ENCODE measurements at regions of chr2 and their contacts with region 1.

Region 1: GRCh38 chr2:190802129-190802528 is 78.5 kb upstream of the GLS start:
- DNase-seq: no peak
- H3K4me3 ChIP-seq: no peak overlapping the region
- H3K27ac ChIP-seq: no peak overlapping the region
- H3K4me1 ChIP-seq: no peaks in the 10 kb centered on the region
- H3K27me3 ChIP-seq: no peaks in the 10 kb centered on the region
- CTCF ChIP-seq: no peak
- POLR2A ChIP-seq: no peak

Region 2: DNA sequence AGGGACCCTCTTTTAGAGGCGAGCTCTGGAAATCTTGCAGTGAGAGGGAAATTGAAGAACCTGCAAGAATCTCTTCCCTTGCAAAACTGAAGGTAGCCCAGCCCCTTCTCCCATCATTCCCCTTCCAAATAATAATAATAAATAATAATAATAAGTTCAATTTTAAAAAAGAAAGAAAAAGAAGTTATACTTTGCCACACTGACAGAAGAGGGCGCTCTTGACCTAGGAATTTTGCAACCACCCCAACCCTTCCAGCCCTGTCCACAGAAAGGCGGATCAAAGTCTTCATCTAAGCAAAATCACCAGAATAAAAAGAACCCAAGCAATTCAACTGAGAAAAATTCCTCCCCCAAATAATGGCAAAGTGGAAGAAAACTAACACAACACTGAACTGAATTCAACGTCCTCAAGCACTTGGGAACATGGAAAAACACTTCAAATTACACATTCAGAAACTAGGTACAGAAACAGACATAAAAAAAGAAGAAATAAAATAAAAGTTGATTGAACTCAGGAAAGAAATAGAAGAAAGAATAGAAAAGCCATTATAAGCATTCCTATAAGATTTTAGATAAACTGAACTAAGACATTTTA is 20.4 kb before region 1 on chr2:
- intact Hi-C with region 1: loop called (anchors 2 kb)
- DNase-seq: peak; percentile 50 to 58
- H3K4me3 ChIP-seq: no peak overlapping the region
- H3K27ac ChIP-seq: no peak overlapping the region
- H3K4me1 ChIP-seq: peaks cover 11 to 12% of the 10 kb centered on the region in 2 donors
- H3K27me3 ChIP-seq: no peaks in the 10 kb centered on the region
- CTCF ChIP-seq: peak; percentile 42 to 85 (median 62)
- POLR2A ChIP-seq: no peak

Measured in thyroid gland (tissue), 4 donors.